ENCODE measurements at regions of chr9 and their contacts with region 1.

Region 1: DNA sequence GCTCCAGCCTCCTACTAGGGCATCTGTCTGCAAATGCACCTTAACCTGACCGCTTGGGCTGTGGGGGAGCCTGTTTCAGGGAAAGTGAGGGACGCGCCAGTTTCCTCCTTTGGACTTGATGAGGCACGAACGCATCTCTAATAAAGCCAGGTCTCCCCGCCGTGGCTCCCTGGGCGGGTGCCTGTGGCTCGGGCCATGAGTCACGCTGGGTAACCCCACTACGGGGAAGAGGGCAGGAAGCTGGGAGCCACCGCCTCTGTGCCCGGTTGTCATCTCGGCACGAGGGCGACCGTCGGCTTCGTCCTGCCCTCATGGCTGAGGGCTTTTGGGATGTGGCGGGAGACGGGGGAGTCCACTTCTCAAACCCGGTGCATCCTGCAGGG is 12.1 kb downstream of the NOTCH1 start:
- DNase-seq: peak; percentile 90
- ATAC-seq: peak; percentile 61
- H3K4me3 Mint-ChIP-seq: peak overlapping the region; percentile 56
- H3K27ac Mint-ChIP-seq: peak overlapping the region; percentile 86
- H3K4me1 Mint-ChIP-seq: peaks cover 48% of the 10 kb centered on the region
- H3K27me3 Mint-ChIP-seq: no peaks in the 10 kb centered on the region
- CTCF ChIP-seq: no peak

Region 2: GRCh38 chr9:136545966-136546698 is 12.4 kb after region 1 on chr9 and contains the start of gene NOTCH1:
- CTCF ChIA-PET with region 1: interaction called, 10 read pairs
- POLR2A ChIA-PET with region 1: interaction called, 15 read pairs
- intact Hi-C with region 1: no loop called
- DNase-seq: peak; percentile 89
- ATAC-seq: peak; percentile 76
- H3K4me3 Mint-ChIP-seq: peak within 1 kb of the TSS; percentile 90
- H3K27ac Mint-ChIP-seq: peak within 1 kb of the TSS; percentile 88
- H3K4me1 Mint-ChIP-seq: peaks cover 37% of the 10 kb centered on the region
- H3K27me3 Mint-ChIP-seq: no peaks in the 10 kb centered on the region
- CTCF ChIP-seq: no peak
- total RNA-seq, gene NOTCH1: 45.7 to 47.6 TPM